Endothelial cell of umbilical vein (primary cell): ENCODE measurements at regions of chr18 and their contacts with region 1.

Region 1: GRCh38 chr18:11937874-11938478 is 29.9 kb upstream of the MPPE1 start:
- DNase-seq: peak; percentile 78
- H3K4me3 ChIP-seq: no peak overlapping the region
- H3K27ac ChIP-seq: no peak overlapping the region
- H3K4me1 ChIP-seq: no peaks in the 10 kb centered on the region
- H3K27me3 ChIP-seq: no peaks in the 10 kb centered on the region
- CTCF ChIP-seq: peak; percentile 60 to 64
- POLR2A ChIP-seq: no peak

Region 2: GRCh38 chr18:11654736-11655605 is 283.0 kb before region 1 on chr18:
- CTCF ChIA-PET with region 1: interaction called, 11 read pairs
- POLR2A ChIA-PET with region 1: no interaction called
- dilution Hi-C with region 1: no loop called
- intact Hi-C with region 1: no loop called
- DNase-seq: peak; percentile 32
- H3K4me3 ChIP-seq: no peak overlapping the region
- H3K27ac ChIP-seq: no peak overlapping the region
- H3K4me1 ChIP-seq: no peaks in the 10 kb centered on the region
- H3K27me3 ChIP-seq: peaks cover 0 to 2% of the 10 kb centered on the region in 2 experiments
- CTCF ChIP-seq: peak; percentile 80 to 84
- POLR2A ChIP-seq: no peak

Region 3: GRCh38 chr18:11925800-11926481 is 12.0 kb before region 1 on chr18:
- CTCF ChIA-PET with region 1: interaction called, 37 read pairs
- POLR2A ChIA-PET with region 1: no interaction called
- dilution Hi-C with region 1: no loop called
- intact Hi-C with region 1: no loop called
- DNase-seq: no peak
- H3K4me3 ChIP-seq: no peak overlapping the region
- H3K27ac ChIP-seq: no peak overlapping the region
- H3K4me1 ChIP-seq: no peaks in the 10 kb centered on the region
- H3K27me3 ChIP-seq: peaks cover 0 to 4% of the 10 kb centered on the region in 2 experiments
- CTCF ChIP-seq: no peak
- POLR2A ChIP-seq: no peak

Region 4: DNA sequence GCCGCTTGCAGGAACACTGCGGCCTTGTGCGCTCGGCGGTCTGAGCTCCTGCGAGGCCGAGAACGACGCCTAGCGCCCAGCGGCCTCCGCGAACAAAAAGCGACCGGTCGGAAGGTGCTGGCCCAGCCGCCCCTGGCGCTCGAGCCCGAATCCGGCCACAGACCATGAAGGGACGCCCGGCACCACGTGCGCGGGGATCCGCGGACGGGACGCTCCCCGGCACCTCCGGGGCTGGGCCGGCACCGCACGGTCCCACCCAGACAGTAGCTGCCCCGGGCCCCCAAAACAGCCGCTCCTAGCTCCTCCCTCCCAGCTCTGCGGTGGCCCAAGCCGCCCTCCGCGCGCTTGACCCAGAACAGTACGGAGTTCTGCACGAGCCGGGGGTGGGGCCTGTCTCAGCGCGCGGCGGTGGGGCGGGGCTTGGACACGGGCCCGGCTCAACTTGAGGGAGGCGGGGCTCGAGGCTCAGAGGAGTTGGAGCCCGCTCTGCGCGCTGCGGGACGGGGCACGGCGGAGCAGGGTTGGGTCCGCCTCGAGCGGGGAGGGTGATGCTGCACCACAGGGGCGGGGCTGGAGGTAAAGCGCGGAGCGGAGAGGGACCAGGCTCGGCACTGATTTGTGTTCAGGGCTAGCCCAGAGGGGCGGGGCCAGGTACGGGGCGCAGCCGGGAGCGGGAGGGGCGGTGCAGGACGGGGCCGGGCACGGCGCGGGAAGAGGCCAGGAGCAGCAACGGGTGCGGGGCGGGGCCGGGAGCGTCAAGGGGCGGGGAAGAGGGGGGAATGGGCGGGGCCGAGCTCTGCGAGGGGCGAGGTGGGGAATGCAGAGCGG is 42.8 kb after region 1 on chr18:
- CTCF ChIA-PET with region 1: interaction called, 74 read pairs
- POLR2A ChIA-PET with region 1: no interaction called
- dilution Hi-C with region 1: no loop called
- intact Hi-C with region 1: no loop called
- DNase-seq: peak; percentile 98
- H3K4me3 ChIP-seq: peak overlapping the region; percentile 43 to 86 (median 72)
- H3K27ac ChIP-seq: peak overlapping the region; percentile 71
- H3K4me1 ChIP-seq: peaks cover 12% of the 10 kb centered on the region
- H3K27me3 ChIP-seq: peaks cover 3 to 4% of the 10 kb centered on the region in 2 experiments
- CTCF ChIP-seq: peak in 1 of 2 donors; percentile 19
- POLR2A ChIP-seq: peak; percentile 61

Region 5: GRCh38 chr18:12005538-12006487 is 67.8 kb after region 1 on chr18:
- CTCF ChIA-PET with region 1: interaction called, 10 read pairs
- POLR2A ChIA-PET with region 1: no interaction called
- dilution Hi-C with region 1: no loop called
- intact Hi-C with region 1: no loop called
- DNase-seq: no peak
- H3K4me3 ChIP-seq: no peak overlapping the region
- H3K27ac ChIP-seq: no peak overlapping the region
- H3K4me1 ChIP-seq: no peaks in the 10 kb centered on the region
- H3K27me3 ChIP-seq: no peaks in the 10 kb centered on the region
- CTCF ChIP-seq: no peak
- POLR2A ChIP-seq: no peak

Region 6: DNA sequence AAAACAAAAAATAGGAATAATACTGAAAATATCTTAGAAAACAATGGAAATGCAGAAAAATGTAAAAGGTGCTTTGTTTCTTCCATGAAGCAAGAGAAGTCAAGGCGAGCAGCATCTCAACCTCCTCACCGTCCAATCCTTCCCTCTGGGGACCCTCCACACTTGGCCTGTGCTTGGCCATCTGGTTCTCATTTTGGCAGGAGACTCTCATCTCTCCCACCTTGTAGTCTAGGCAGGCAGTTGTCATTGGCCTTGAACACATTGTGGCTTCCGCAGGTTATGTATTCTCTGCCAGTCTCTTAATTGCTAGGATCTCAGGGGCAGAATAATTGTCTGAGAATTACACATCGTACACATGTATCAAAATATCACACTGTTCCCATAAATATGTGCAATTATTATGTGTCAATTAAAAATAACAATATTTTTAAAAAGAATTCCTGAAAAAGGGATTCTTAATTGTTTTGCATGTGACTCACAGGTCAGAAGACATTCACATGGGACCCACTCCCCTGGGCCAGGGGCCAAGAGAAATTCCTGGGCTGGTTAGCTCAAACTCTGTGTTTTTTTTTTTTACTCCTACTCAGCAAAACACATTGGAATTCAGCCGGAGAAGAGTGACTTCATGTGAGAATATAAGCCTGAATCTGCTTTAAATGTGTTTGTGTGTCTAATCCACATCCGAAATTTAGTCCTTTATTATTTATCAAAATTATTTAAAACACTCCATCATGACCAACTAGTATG is 141.7 kb after region 1 on chr18:
- CTCF ChIA-PET with region 1: no interaction called
- POLR2A ChIA-PET with region 1: no interaction called
- dilution Hi-C with region 1: no loop called
- intact Hi-C with region 1: no loop called
- DNase-seq: peak; percentile 91
- H3K4me3 ChIP-seq: no peak overlapping the region
- H3K27ac ChIP-seq: peak overlapping the region; percentile 55
- H3K4me1 ChIP-seq: peaks cover 11% of the 10 kb centered on the region
- H3K27me3 ChIP-seq: no peaks in the 10 kb centered on the region
- CTCF ChIP-seq: no peak
- POLR2A ChIP-seq: no peak

Region 7: DNA sequence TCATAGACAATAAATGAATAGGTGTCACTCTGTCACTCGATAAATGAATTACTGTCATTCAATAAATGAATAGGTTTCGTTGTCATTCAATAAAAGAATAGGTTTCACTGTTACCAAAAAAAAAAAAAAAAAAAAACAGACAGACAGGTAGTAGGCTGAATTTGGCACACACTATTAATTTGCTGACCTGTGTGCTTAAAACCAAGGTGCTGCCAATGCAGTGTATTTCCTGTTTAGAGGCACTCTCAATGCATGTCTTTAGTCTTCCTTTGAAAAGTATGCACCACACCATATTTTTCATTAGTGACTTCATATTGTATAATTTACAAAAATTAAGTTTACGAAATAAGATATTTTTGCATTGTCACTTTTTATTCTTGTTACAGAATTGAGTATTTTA is 171.9 kb after region 1 on chr18:
- CTCF ChIA-PET with region 1: no interaction called
- POLR2A ChIA-PET with region 1: no interaction called
- dilution Hi-C with region 1: no loop called
- intact Hi-C with region 1: no loop called
- DNase-seq: no peak
- H3K4me3 ChIP-seq: no peak overlapping the region
- H3K27ac ChIP-seq: no peak overlapping the region
- H3K4me1 ChIP-seq: no peaks in the 10 kb centered on the region
- H3K27me3 ChIP-seq: peaks cover 8 to 13% of the 10 kb centered on the region in 2 experiments
- CTCF ChIP-seq: no peak
- POLR2A ChIP-seq: no peak

Region 8: GRCh38 chr18:12121175-12122042 is 183.4 kb after region 1 on chr18:
- CTCF ChIA-PET with region 1: no interaction called
- POLR2A ChIA-PET with region 1: no interaction called
- dilution Hi-C with region 1: no loop called
- intact Hi-C with region 1: loop called (anchors 5 kb)
- DNase-seq: peak; percentile 23
- H3K4me3 ChIP-seq: no peak overlapping the region
- H3K27ac ChIP-seq: no peak overlapping the region
- H3K4me1 ChIP-seq: no peaks in the 10 kb centered on the region
- H3K27me3 ChIP-seq: peaks cover 6 to 13% of the 10 kb centered on the region in 2 experiments
- CTCF ChIP-seq: peak in 1 of 2 donors; percentile 45
- POLR2A ChIP-seq: no peak

Region 9: GRCh38 chr18:12246849-12247808 is 309.2 kb after region 1 on chr18:
- CTCF ChIA-PET with region 1: interaction called, 12 read pairs
- POLR2A ChIA-PET with region 1: no interaction called
- dilution Hi-C with region 1: no loop called
- intact Hi-C with region 1: no loop called
- DNase-seq: peak; percentile 37
- H3K4me3 ChIP-seq: no peak overlapping the region
- H3K27ac ChIP-seq: no peak overlapping the region
- H3K4me1 ChIP-seq: no peaks in the 10 kb centered on the region
- H3K27me3 ChIP-seq: peaks cover 11 to 33% of the 10 kb centered on the region in 2 experiments
- CTCF ChIP-seq: peak; percentile 40 to 68
- POLR2A ChIP-seq: no peak